Activated CD4-positive, alpha-beta T cell treated with anti-CD3 and anti-CD28 coated beads for 36 hours (primary cell): ENCODE measurements at regions of chr11 and their contacts with region 1.

Region 1: DNA sequence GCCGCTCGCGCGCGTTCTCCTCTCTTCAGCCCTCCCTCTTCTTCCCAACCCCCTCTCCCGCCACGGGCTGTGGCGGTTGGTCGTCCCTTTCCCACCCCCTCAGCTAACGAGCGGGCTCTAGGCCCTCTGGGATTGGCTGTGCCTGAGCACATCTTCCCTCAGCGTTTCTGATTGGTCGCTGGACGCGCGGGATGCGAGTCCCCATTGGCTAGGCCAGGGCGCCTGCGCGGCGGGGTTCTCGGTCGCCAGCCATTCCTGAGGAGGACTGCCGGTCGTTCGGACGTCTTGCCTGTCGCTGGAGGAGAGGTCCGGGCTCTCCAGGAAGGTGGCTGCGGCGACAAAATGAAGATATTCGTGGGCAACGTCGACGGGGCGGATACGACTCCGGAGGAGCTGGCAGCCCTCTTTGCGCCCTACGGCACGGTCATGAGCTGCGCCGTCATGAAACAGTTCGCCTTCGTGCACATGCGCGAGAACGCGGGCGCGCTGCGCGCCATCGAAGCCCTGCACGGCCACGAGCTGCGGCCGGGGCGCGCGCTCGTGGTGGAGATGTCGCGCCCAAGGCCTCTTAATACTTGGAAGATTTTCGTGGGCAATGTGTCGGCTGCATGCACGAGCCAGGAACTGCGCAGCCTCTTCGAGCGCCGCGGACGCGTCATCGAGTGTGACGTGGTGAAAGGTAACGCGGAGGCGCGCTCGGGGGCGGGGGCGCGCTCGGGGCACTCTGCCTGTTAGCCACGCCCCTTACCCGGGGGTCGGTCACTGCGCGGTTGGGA is at the start of gene RBM14:
- DNase-seq: peak; percentile 99
- ATAC-seq: peak; percentile 98
- H3K4me3 Mint-ChIP-seq: peak within 1 kb of the TSS; percentile 89
- H3K27ac Mint-ChIP-seq: peak within 1 kb of the TSS; percentile 97
- H3K4me1 Mint-ChIP-seq: peaks cover 31% of the 10 kb centered on the region
- H3K27me3 Mint-ChIP-seq: no peaks in the 10 kb centered on the region
- total RNA-seq, gene RBM14: 122 to 137 TPM

Region 2: DNA sequence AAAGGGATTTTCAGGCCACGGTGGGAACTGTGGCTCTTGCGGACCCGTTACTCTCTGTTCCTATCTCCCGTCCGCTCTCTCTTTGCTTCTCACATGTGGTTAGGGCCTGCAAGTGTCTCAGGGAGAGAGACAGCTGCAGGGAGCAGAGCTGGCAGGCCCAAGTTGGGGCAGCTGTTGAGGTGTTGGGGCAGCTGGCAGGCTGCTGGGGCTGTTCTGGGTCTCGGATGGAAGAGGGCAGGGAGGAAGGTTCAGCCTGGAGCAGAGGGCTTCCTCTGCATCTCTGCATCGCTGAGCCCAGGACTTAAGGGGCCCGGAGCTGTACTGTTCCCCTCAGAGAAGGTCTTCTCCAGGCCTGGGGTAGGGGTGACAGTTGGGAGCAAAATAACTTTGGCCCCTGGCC is 341.2 kb before region 1 on chr11:
- CTCF ChIA-PET with region 1: no interaction called
- POLR2A ChIA-PET with region 1: no interaction called
- intact Hi-C with region 1: no loop called
- DNase-seq: no peak
- ATAC-seq: no peak
- H3K4me3 Mint-ChIP-seq: no peak overlapping the region
- H3K27ac Mint-ChIP-seq: no peak overlapping the region
- H3K4me1 Mint-ChIP-seq: peaks cover 14% of the 10 kb centered on the region
- H3K27me3 Mint-ChIP-seq: no peaks in the 10 kb centered on the region

Region 3: DNA sequence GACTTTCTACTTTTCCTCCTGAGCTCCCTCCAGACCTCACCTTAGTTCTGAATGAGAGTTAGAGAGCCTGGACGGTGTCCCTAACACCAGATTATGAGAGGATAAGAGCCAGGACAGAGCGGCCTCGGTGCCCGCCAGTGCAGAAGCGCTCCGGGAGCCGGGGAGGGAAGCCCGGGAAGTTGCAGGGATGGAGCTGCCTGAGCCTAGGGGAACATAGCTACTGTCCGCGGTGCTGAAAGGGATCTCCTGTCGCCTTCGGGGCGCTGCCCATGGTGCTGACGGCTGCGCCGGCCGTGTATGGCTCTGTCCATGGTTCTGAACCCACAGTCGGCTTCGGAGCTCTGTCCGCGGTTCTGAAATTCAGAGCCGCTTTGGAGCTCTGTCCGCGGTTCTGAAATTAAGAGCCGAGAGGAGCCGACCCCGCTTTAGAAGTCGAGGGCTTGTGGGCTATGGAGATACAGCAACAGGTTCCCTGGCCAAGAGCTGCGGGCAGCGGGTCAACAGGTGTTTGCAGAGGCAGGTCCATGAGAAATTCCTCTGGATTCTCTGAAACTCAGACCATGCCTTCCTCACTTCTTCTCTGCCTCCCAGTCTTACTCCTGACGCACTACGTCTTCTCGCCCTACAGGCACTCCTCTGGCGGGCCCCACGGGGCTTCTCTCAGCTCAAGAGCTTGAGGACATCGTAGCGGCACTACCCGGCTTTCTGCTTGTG is 194.9 kb before region 1 on chr11:
- CTCF ChIA-PET with region 1: no interaction called
- POLR2A ChIA-PET with region 1: interaction called, 4 read pairs
- intact Hi-C with region 1: loop called in 1 of 2 experiments (anchors 2 kb)
- DNase-seq: peak; percentile 93
- ATAC-seq: peak; percentile 40
- H3K4me3 Mint-ChIP-seq: no peak overlapping the region
- H3K27ac Mint-ChIP-seq: no peak overlapping the region
- H3K4me1 Mint-ChIP-seq: peaks cover 30% of the 10 kb centered on the region
- H3K27me3 Mint-ChIP-seq: peaks cover 35% of the 10 kb centered on the region

Region 4: DNA sequence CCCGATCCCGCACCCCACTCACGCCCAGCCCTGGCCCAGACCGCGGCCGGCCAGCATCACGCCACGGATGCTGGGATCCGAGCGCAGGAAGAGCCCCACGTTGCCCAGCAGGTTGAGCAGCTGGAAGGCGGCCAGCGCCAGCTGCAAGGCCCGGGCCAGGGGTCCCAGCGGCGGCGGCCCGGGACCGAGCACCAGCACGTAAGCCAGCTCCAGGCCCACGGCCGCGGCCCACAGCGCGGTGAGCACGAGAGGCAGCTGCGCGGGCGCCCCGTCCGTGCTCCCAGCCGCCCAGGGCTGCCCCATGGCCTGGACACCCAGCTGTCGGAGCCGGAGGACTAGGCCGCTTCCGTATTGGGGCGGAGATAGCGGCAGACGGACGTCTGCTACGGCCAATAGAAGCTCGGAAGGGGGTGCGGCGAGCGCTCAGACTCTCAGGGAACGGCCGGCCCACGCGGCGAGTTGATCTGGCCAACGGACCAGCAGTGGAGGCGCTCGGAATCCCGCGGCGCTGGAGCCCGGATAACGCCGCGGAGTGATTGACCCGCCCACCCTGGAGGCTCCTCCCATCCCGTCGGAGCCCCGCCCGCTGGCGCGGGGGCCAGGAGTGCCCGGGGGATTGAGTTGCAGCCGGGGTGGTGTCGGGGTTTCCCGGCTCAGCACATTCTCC is 70.7 kb before region 1 on chr11 and contains the start of gene ZDHHC24:
- CTCF ChIA-PET with region 1: interaction called, 3 read pairs
- POLR2A ChIA-PET with region 1: interaction called, 3 read pairs
- intact Hi-C with region 1: loop called (anchors 1 kb)
- DNase-seq: peak; percentile 95
- ATAC-seq: peak; percentile 94
- H3K4me3 Mint-ChIP-seq: peak within 1 kb of the TSS; percentile 76
- H3K27ac Mint-ChIP-seq: peak within 1 kb of the TSS; percentile 67
- H3K4me1 Mint-ChIP-seq: peaks cover 20% of the 10 kb centered on the region
- H3K27me3 Mint-ChIP-seq: peaks cover 5% of the 10 kb centered on the region
- total RNA-seq, gene ZDHHC24: 9.7 to 11.3 TPM

Region 5: GRCh38 chr11:66638177-66639065 is 21.9 kb after region 1 on chr11 and contains the start of gene RBM4:
- CTCF ChIA-PET with region 1: interaction called, 32 read pairs
- POLR2A ChIA-PET with region 1: interaction called, 98 read pairs
- intact Hi-C with region 1: loop called (anchors 1 kb)
- DNase-seq: peak; percentile 97
- ATAC-seq: peak; percentile 95
- H3K4me3 Mint-ChIP-seq: peak within 1 kb of the TSS; percentile 89
- H3K27ac Mint-ChIP-seq: peak within 1 kb of the TSS; percentile 97
- H3K4me1 Mint-ChIP-seq: peaks cover 65% of the 10 kb centered on the region
- H3K27me3 Mint-ChIP-seq: no peaks in the 10 kb centered on the region
- total RNA-seq, gene RBM4: 104 to 122 TPM

Region 6: DNA sequence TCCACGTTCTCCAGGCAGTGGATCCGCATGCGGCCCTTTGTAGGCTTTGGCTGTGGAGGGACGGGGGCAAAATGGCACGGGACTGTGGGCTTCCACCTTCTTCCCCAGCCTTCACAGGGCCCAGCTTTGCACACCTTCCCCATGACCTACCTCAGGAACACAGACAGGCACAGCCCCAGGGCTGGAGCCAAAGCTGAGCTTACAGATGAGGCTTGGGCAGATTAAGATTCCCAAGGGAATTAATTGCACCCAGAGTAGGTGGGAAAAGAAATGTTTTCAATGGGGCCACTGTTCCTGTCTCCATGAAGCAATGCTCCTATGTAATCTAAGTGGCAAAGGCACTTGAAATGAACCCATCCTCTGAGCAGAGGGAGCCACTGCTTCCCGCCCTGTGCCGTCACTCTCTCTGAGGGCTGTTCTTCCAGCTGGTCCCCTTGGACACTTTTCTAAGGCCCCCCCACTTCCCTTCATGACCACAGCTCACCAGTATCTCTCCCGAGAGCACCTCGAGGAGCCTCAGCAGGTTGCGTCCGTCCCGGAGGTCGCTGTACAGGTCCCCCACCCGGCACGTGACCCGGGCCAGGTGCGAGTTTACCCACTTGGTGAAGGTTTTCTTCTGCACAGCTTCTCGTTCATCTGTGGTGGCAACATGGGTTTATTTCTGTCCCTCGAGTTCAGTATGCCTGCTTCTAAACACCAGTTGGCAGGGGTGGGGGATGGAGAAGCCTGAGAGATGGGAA is 98.9 kb after region 1 on chr11:
- CTCF ChIA-PET with region 1: no interaction called
- POLR2A ChIA-PET with region 1: no interaction called
- intact Hi-C with region 1: no loop called
- DNase-seq: no peak
- ATAC-seq: no peak
- H3K4me3 Mint-ChIP-seq: no peak overlapping the region
- H3K27ac Mint-ChIP-seq: no peak overlapping the region
- H3K4me1 Mint-ChIP-seq: peaks cover 9% of the 10 kb centered on the region
- H3K27me3 Mint-ChIP-seq: peaks cover 22% of the 10 kb centered on the region

Region 7: GRCh38 chr11:66855574-66856495 is 239.3 kb after region 1 on chr11:
- CTCF ChIA-PET with region 1: no interaction called
- POLR2A ChIA-PET with region 1: no interaction called
- intact Hi-C with region 1: loop called in 1 of 2 experiments (anchors 1 kb)
- DNase-seq: peak; percentile 94
- ATAC-seq: peak; percentile 83
- H3K4me3 Mint-ChIP-seq: peak overlapping the region; percentile 82
- H3K27ac Mint-ChIP-seq: peak overlapping the region; percentile 73
- H3K4me1 Mint-ChIP-seq: peaks cover 11% of the 10 kb centered on the region
- H3K27me3 Mint-ChIP-seq: no peaks in the 10 kb centered on the region

Region 8: DNA sequence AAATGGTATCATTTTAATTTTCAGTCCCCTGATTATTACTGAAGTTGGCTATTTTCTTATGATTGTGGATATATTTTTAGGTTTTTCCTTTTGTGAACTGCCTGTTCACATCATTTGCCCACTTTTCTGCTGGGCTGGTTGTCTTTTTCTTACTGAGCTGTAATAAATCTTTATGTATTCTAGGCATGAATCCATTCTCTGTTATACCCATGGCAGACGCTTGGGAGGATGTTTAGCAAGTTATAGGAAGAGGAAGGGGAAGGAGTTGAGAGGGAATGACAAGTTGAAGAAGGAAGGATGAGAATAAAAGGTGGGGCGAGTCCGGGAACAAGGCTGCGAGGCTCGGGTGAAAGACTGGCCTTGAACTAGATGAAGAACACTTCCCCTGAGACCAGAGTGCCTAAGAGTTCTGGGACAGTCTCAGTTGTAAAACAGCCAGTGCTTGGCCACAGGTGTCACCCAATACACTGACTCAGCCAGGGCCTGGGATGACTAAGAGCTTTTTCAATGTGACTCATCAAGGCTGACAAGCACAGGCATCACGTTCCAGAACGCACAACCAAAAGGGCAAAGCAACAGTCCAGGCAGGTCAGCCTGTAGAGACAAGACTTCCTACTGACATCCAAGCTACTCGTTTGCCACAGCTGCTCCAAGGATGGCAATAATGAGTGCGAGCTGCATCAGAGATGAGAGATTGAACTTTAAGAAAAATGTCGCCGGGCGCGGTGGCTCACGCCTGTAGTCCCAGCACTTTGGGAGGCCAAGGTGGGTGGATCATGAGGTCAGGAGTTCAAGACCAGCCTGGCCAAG is 275.5 kb after region 1 on chr11:
- CTCF ChIA-PET with region 1: no interaction called
- POLR2A ChIA-PET with region 1: no interaction called
- intact Hi-C with region 1: no loop called
- DNase-seq: peak; percentile 85
- ATAC-seq: peak; percentile 100
- H3K4me3 Mint-ChIP-seq: no peak overlapping the region
- H3K27ac Mint-ChIP-seq: peak overlapping the region; percentile 8
- H3K4me1 Mint-ChIP-seq: peaks cover 8% of the 10 kb centered on the region
- H3K27me3 Mint-ChIP-seq: no peaks in the 10 kb centered on the region

Region 9: DNA sequence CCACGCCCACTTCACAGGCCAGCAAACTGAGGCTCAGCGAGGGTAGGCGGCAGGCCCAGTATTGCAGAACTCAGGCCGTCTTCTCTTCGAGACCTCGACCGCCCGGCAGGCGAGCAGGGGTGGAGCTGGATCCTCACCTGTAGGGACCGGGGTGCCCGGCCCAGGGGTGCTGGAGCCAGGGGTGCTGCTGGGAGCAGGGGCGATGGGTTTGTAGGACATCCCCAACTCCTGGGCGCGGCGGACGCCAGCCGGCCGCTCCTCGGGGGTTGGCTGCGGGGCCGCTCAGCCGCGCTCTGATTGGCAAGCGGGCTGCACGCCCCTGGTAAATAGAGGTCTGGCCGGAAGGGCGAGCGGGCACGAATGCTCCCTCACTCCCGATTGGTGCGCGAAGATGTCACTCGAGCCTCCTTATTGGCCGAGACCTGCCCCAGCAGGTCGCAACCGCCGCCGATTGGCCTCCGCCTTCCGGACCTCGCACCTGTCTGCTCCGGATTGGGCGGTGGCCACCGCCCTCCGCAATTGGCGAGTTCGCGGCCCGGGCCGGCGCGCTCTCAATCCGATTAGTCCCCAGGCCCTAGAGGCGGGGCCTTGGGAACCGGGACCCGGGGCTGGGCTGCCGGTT is 891.4 kb after region 1 on chr11 and contains the start of gene CDK2AP2:
- CTCF ChIA-PET with region 1: no interaction called
- POLR2A ChIA-PET with region 1: no interaction called
- intact Hi-C with region 1: loop called in 1 of 2 experiments (anchors 1 kb)
- DNase-seq: peak; percentile 99
- ATAC-seq: peak; percentile 78
- H3K4me3 Mint-ChIP-seq: peak within 1 kb of the TSS; percentile 89
- H3K27ac Mint-ChIP-seq: peak within 1 kb of the TSS; percentile 88
- H3K4me1 Mint-ChIP-seq: peaks cover 31% of the 10 kb centered on the region
- H3K27me3 Mint-ChIP-seq: no peaks in the 10 kb centered on the region
- total RNA-seq, gene CDK2AP2: 64.1 to 68.7 TPM